SK-N-SH (cell line): ENCODE measurements at regions of chr16 and their contacts with region 1.

Region 1: DNA sequence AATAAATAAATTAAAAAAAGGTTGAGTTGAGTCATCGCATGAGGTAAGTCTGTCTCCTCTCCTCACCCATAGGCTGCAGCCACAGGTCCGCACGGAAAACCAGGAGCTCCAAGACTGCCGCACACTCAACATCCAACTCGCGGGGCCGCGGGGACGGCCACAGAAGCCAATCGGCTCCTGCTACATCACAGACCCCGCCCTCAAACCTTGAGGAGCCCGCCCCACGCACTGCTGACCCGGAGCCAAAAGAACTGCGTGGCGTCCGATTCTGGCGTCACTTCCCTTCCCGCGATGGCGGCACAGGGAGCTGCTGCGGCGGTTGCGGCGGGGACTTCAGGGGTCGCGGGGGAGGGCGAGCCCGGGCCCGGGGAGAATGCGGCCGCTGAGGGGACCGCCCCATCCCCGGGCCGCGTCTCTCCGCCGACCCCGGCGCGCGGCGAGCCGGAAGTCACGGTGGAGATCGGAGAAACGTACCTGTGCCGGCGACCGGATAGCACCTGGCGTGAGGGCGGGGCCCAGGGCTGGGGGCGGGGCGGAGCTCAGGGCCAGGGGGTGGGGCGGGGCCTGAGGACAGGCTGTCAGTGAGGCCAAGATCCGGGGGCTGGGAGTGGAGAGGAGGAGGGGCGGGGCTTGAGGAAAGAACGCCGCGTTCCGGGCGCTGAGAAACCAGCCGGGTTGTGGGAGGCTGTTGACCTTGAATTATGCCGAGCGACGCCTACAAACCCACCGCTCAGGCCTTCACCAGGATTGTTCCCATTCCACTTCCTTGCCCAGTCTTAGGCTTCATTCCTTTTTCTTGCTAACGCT is at the start of gene KAT8:
- DNase-seq: peak; percentile 98
- H3K4me3 ChIP-seq: peak within 1 kb of the TSS; percentile 61 to 95
- H3K27ac ChIP-seq: peak within 1 kb of the TSS; percentile 74 to 83
- H3K4me1 ChIP-seq: peaks cover 6 to 8% of the 10 kb centered on the region in 2 experiments; a peak in 2 of 4 replicates
- H3K27me3 ChIP-seq: no peaks in the 10 kb centered on the region
- CTCF ChIP-seq: no peak
- EP300 ChIP-seq: no peak
- RAD21 ChIP-seq: peak; percentile 12; the same call in 1 of the 2 replicates
- polyA plus RNA-seq, gene KAT8: 51.8 and 52.0 TPM in 2 replicates

Region 2: GRCh38 chr16:30997000-30997886 is 120.4 kb before region 1 on chr16:
- CTCF ChIA-PET with region 1: no interaction called
- POLR2A ChIA-PET with region 1: no interaction called
- DNase-seq: peak; percentile 97
- H3K4me3 ChIP-seq: peak overlapping the region in 1 of 2 experiments; percentile 25; a peak in 2 of 4 replicates
- H3K27ac ChIP-seq: peak overlapping the region; percentile 45 to 92; a peak in 3 of 4 replicates
- H3K4me1 ChIP-seq: peaks cover 14 to 18% of the 10 kb centered on the region in 2 experiments; a peak in 3 of 4 replicates
- H3K27me3 ChIP-seq: no peaks in the 10 kb centered on the region
- CTCF ChIP-seq: no peak
- EP300 ChIP-seq: no peak
- RAD21 ChIP-seq: no peak

Region 3: GRCh38 chr16:31073968-31074813 is 43.4 kb before region 1 on chr16 and contains the starts of genes ZNF646 and ZNF668:
- CTCF ChIA-PET with region 1: interaction called, 6 read pairs
- POLR2A ChIA-PET with region 1: interaction called, 22 read pairs
- DNase-seq: peak; percentile 92
- H3K4me3 ChIP-seq: peak within 1 kb of the TSS; percentile 90 to 95
- H3K27ac ChIP-seq: peak within 1 kb of the TSS; percentile 94 to 95
- H3K4me1 ChIP-seq: peaks cover 5 to 14% of the 10 kb centered on the region in 2 experiments; a peak in 3 of 4 replicates
- H3K27me3 ChIP-seq: no peaks in the 10 kb centered on the region
- CTCF ChIP-seq: no peak; the same call in 1 of the 2 replicates
- EP300 ChIP-seq: peak in 1 of 2 experiments; percentile 13; a peak in 1 of 4 replicates
- RAD21 ChIP-seq: no peak; the same call in 1 of the 2 replicates
- polyA plus RNA-seq, gene ZNF646: 2.7 and 3.4 TPM in 2 replicates
- polyA plus RNA-seq, gene ZNF668: 12.4 and 13.6 TPM in 2 replicates

Region 4: DNA sequence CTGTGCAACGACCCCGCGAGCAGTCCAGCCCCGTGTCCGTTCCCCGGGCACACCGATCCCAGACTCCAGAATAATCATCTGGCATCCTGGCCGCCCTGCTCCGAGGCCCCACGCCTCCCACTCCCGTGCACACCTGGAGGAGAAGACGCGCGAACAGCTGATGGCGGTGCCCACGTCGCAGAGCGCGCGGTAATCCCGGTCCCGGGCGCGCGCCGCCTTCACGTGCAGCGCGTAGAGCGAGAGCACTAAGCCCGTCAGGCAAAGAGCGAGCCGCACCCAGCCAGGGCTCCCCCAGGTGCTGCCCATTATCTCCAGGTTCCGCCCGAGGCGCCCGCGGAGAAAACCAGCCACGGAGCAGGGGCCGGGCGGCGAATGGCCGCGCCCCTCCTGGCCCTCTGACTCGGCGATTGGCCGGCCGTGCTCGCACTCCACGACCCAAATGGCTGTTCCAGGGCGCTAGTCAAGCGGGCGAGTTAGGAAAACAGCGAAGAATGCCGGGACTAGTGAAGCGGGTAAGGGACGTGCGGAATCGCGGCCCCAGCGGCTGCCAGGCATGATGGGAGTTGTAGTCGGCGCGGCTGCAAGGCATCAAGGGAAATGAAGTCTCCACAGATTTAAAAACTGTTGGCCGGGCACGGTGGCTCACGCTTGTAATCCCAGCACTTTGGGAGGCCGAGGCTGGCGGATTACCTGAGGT is 23.0 kb before region 1 on chr16 and contains the start of gene VKORC1:
- CTCF ChIA-PET with region 1: interaction called, 3 read pairs
- POLR2A ChIA-PET with region 1: interaction called, 10 read pairs
- DNase-seq: peak; percentile 93
- H3K4me3 ChIP-seq: peak within 1 kb of the TSS; percentile 68 to 100
- H3K27ac ChIP-seq: peak within 1 kb of the TSS; percentile 73 to 78
- H3K4me1 ChIP-seq: peaks cover 4 to 16% of the 10 kb centered on the region in 2 experiments; a peak in 2 of 4 replicates
- H3K27me3 ChIP-seq: no peaks in the 10 kb centered on the region
- CTCF ChIP-seq: no peak
- EP300 ChIP-seq: peak in 1 of 2 experiments; percentile 29; a peak in 1 of 4 replicates
- RAD21 ChIP-seq: no peak
- polyA plus RNA-seq, gene VKORC1: 419 and 434 TPM in 2 replicates

Region 5: DNA sequence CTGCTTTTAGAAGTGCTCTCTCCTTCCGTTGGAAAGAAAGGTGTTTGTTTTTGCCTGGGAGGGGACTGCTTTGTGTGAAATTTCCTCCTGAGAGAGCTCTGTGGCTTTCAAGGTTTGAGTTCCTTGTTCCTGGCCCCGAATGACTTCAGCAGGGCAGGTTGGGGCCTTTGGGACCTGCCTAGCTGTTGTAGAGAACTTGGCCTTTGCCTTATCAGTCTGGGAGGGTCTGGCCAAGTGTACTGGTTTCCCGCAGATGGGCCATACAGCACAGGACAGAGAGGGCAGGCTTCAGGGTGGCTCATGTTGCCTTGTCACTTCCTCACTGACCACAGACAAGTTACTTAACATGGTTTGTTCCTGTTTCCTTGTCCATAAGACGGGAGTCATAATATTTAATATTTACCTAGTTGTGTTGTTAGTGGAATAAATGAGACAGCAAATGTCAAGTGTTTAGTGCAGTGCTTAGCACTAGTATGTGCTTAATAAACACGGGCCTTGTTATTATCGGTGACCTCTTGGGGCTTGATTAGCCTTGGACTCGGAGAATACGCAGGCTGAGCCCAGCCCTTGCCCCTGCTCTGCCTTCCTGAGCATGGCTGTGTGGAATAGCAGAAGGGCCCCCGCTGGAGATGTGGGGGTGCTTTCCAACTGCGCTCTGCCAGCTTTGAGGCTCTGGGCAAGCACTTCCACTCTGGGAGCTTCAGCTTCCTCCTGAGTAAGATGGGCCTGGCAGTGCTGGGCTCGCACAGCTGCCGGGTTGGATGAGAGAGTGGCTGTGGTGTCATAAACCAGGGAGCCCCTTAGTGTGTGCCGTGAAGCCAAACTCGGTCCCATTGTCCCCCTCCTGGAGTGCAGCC is 11.3 kb after region 1 on chr16:
- CTCF ChIA-PET with region 1: interaction called, 4 read pairs
- POLR2A ChIA-PET with region 1: interaction called, 15 read pairs
- DNase-seq: no peak
- H3K4me3 ChIP-seq: no peak overlapping the region
- H3K27ac ChIP-seq: no peak overlapping the region
- H3K4me1 ChIP-seq: peaks cover 0 to 7% of the 10 kb centered on the region in 2 experiments; a peak in 1 of 4 replicates
- H3K27me3 ChIP-seq: no peaks in the 10 kb centered on the region
- CTCF ChIP-seq: no peak
- EP300 ChIP-seq: no peak
- RAD21 ChIP-seq: no peak

Region 6: GRCh38 chr16:31134625-31135547 is 17.3 kb after region 1 on chr16:
- CTCF ChIA-PET with region 1: interaction called, 4 read pairs
- POLR2A ChIA-PET with region 1: interaction called, 15 read pairs
- DNase-seq: no peak
- H3K4me3 ChIP-seq: no peak overlapping the region
- H3K27ac ChIP-seq: no peak overlapping the region; a peak in 1 of 4 replicates
- H3K4me1 ChIP-seq: peaks cover 4 to 31% of the 10 kb centered on the region in 2 experiments; a peak in 2 of 4 replicates
- H3K27me3 ChIP-seq: no peaks in the 10 kb centered on the region
- CTCF ChIP-seq: no peak
- EP300 ChIP-seq: no peak
- RAD21 ChIP-seq: no peak

Region 7: DNA sequence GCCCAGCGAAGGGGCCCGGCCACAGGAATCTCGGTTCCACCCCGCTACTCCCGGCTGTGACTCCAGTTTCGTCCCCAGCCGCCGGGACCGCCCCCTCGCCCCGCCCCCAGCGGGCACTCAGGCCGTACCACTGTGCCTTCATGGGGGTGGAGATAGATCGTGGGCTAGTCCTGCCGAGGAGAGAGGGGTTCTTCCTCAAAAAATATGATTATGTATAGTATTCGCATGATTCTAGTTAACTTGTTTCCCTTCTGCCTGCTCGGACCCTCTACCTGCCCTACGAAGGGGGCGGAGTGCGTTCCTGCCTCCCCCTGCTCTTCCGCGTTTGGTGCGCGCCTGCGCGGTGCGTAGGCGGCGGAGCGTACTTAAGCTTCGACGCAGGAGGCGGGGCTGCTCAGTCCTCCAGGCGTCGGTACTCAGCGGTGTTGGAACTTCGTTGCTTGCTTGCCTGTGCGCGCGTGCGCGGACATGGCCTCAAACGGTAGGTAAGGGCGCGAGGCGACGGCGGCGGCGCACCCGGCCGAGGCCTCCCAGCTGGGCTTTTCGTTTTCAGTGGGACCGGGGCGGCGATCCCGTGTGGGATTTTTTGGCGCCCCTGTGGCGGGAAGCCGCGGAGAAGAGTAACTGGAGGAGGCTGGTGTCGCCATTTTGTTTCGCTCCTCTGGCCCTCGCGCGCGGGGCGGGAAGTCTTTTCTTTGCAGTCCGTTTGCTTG is 62.3 kb after region 1 on chr16 and contains the start of gene FUS:
- CTCF ChIA-PET with region 1: no interaction called
- POLR2A ChIA-PET with region 1: interaction called, 11 read pairs
- DNase-seq: peak; percentile 99
- H3K4me3 ChIP-seq: peak within 1 kb of the TSS; percentile 77 to 99
- H3K27ac ChIP-seq: peak within 1 kb of the TSS; percentile 95
- H3K4me1 ChIP-seq: peaks cover 9 to 15% of the 10 kb centered on the region in 2 experiments; a peak in 2 of 4 replicates
- H3K27me3 ChIP-seq: no peaks in the 10 kb centered on the region
- CTCF ChIP-seq: no peak
- EP300 ChIP-seq: peak in 1 of 2 experiments; percentile 53; a peak in 1 of 4 replicates
- RAD21 ChIP-seq: no peak
- polyA plus RNA-seq, gene FUS: 298 and 429 TPM in 2 replicates

Region 8: GRCh38 chr16:31202414-31203375 is 85.1 kb after region 1 on chr16 and contains the start of gene PYCARD:
- CTCF ChIA-PET with region 1: no interaction called
- POLR2A ChIA-PET with region 1: no interaction called
- DNase-seq: peak; percentile 60
- H3K4me3 ChIP-seq: no peak within 1 kb of the TSS
- H3K27ac ChIP-seq: no peak within 1 kb of the TSS
- H3K4me1 ChIP-seq: no peaks in the 10 kb centered on the region
- H3K27me3 ChIP-seq: peaks cover 13% of the 10 kb centered on the region
- CTCF ChIP-seq: no peak
- EP300 ChIP-seq: no peak
- RAD21 ChIP-seq: no peak
- polyA plus RNA-seq, gene PYCARD: 0.28 and 0.42 TPM in 2 replicates